Naive thymus-derived CD4-positive, alpha-beta T cell (primary cell): ENCODE measurements at regions of chr17 and their contacts with region 1.

Region 1: GRCh38 chr17:41322094-41322902 is 6.8 kb upstream of the KRTAP17-1 start:
- DNase-seq: peak in 7 of 9 donors; percentile 50 to 75 (median 60)
- ATAC-seq: peak; percentile 81
- H3K4me3 ChIP-seq: no peak overlapping the region
- H3K4me3 Mint-ChIP-seq: peak overlapping the region in 2 of 10 donors; percentile 25 to 27
- H3K27ac ChIP-seq: no peak overlapping the region
- H3K27ac Mint-ChIP-seq: peak overlapping the region; percentile 34 to 87 (median 77)
- H3K4me1 ChIP-seq: peaks cover 26 to 44% of the 10 kb centered on the region in 2 donors
- H3K4me1 Mint-ChIP-seq: peaks cover 11 to 59% (median 50%) of the 10 kb centered on the region in 7 donors
- H3K27me3 ChIP-seq: no peaks in the 10 kb centered on the region
- H3K27me3 Mint-ChIP-seq: no peaks in the 10 kb centered on the region

Region 2: GRCh38 chr17:40803617-40804082 is 518.6 kb before region 1 on chr17:
- CTCF ChIA-PET with region 1: interaction called, 6 read pairs
- POLR2A ChIA-PET with region 1: no interaction called
- intact Hi-C with region 1: loop called in 1 of 2 experiments (anchors 2 kb)
- DNase-seq: peak; percentile 34 to 74 (median 54)
- ATAC-seq: peak; percentile 90
- H3K4me3 ChIP-seq: no peak overlapping the region
- H3K4me3 Mint-ChIP-seq: peak overlapping the region in 1 of 10 donors; percentile 33
- H3K27ac ChIP-seq: no peak overlapping the region
- H3K27ac Mint-ChIP-seq: no peak overlapping the region
- H3K4me1 ChIP-seq: no peaks in the 10 kb centered on the region
- H3K4me1 Mint-ChIP-seq: peaks cover 0 to 4% (median 3%) of the 10 kb centered on the region in 7 donors
- H3K27me3 ChIP-seq: peaks cover 0 to 4% of the 10 kb centered on the region in 2 donors
- H3K27me3 Mint-ChIP-seq: peaks cover 33 to 51% (median 48%) of the 10 kb centered on the region in 5 donors

Region 3: GRCh38 chr17:40909351-40909750 is 412.9 kb before region 1 on chr17:
- CTCF ChIA-PET with region 1: interaction called, 5 read pairs
- POLR2A ChIA-PET with region 1: interaction called, 3 read pairs
- intact Hi-C with region 1: loop called (anchors 1 kb)
- DNase-seq: peak; percentile 29 to 70 (median 56)
- ATAC-seq: peak; percentile 93
- H3K4me3 ChIP-seq: no peak overlapping the region
- H3K4me3 Mint-ChIP-seq: no peak overlapping the region
- H3K27ac ChIP-seq: no peak overlapping the region
- H3K27ac Mint-ChIP-seq: no peak overlapping the region
- H3K4me1 ChIP-seq: no peaks in the 10 kb centered on the region
- H3K4me1 Mint-ChIP-seq: no peaks in the 10 kb centered on the region
- H3K27me3 ChIP-seq: peaks cover 5 to 7% of the 10 kb centered on the region in 2 donors
- H3K27me3 Mint-ChIP-seq: peaks cover 26 to 45% (median 36%) of the 10 kb centered on the region in 5 donors

Region 4: DNA sequence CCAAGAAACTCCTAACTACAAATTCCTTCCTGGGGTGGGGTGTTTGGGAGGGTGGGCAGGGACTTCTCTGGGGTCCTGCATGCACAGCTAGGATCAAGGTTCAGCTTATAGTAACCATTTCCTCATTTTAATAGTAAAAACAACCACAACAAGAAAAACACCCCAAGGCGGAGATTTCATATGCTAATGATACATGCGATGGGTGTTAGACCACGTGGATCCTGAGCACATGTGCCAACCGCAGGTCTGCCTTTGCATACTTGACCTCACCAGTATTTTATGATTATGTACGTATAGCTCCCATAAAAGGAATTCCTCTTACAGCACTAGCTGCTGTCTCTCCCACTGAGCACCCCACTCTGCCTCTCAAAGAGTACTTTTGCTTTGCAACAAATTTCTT is 206.0 kb before region 1 on chr17:
- CTCF ChIA-PET with region 1: interaction called, 6 read pairs
- POLR2A ChIA-PET with region 1: no interaction called
- intact Hi-C with region 1: loop called in 1 of 2 experiments (anchors 1 kb)
- DNase-seq: no peak
- ATAC-seq: peak; percentile 36
- H3K4me3 ChIP-seq: no peak overlapping the region
- H3K4me3 Mint-ChIP-seq: no peak overlapping the region
- H3K27ac ChIP-seq: no peak overlapping the region
- H3K27ac Mint-ChIP-seq: no peak overlapping the region
- H3K4me1 ChIP-seq: peaks cover 5 to 7% of the 10 kb centered on the region in 2 donors
- H3K4me1 Mint-ChIP-seq: peaks cover 4 to 40% (median 29%) of the 10 kb centered on the region in 7 donors
- H3K27me3 ChIP-seq: no peaks in the 10 kb centered on the region
- H3K27me3 Mint-ChIP-seq: peaks cover 0 to 15% (median 0%) of the 10 kb centered on the region in 5 donors

Region 5: GRCh38 chr17:41308251-41308917 is 13.9 kb before region 1 on chr17:
- CTCF ChIA-PET with region 1: interaction called, 39 read pairs
- POLR2A ChIA-PET with region 1: interaction called, 36 read pairs
- intact Hi-C with region 1: loop called in 1 of 2 experiments (anchors 1 kb)
- DNase-seq: peak in 8 of 9 donors; percentile 56 to 94 (median 92)
- ATAC-seq: peak; percentile 91
- H3K4me3 ChIP-seq: peak overlapping the region; percentile 24
- H3K4me3 Mint-ChIP-seq: peak overlapping the region; percentile 65 to 89 (median 78)
- H3K27ac ChIP-seq: peak overlapping the region; percentile 75
- H3K27ac Mint-ChIP-seq: peak overlapping the region; percentile 82 to 100 (median 98)
- H3K4me1 ChIP-seq: peaks cover 41 to 49% of the 10 kb centered on the region in 2 donors
- H3K4me1 Mint-ChIP-seq: peaks cover 28 to 80% (median 70%) of the 10 kb centered on the region in 7 donors
- H3K27me3 ChIP-seq: no peaks in the 10 kb centered on the region
- H3K27me3 Mint-ChIP-seq: peaks cover 0 to 8% (median 0%) of the 10 kb centered on the region in 5 donors

Region 6: DNA sequence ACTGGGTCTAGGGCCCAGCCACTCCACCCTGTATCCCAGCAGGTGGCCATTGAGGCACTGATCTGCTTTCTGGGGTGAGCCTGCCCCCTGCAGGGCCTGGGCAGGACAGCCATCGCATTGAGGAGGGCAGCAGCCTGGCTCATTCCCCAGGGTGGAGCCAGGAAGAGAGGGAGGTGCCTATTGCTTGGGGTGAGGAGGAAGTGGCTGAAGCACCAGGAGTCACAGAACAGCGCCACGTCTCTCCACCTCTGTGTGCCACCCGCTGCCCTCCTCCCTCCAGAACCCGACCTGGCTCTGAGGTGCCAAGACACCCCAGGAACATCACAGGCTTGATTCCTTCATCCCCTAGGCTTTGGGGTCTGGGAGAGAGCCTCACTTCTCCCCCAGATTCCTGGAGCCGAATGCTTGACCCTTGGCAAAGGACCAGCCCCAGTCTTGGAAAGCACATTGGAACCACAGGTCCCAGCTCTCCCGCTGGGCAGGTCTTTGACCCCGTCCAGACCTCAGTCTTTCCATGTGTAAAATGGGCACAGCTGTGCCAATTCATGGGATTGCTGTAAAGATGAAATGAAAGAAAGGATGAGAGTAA is 174.6 kb after region 1 on chr17:
- CTCF ChIA-PET with region 1: interaction called, 3 read pairs
- POLR2A ChIA-PET with region 1: no interaction called
- intact Hi-C with region 1: loop called in 1 of 2 experiments (anchors 5 kb)
- DNase-seq: peak; percentile 19 to 61 (median 48)
- ATAC-seq: peak; percentile 88
- H3K4me3 ChIP-seq: no peak overlapping the region
- H3K4me3 Mint-ChIP-seq: peak overlapping the region in 3 of 10 donors; percentile 30 to 59 (median 52)
- H3K27ac ChIP-seq: no peak overlapping the region
- H3K27ac Mint-ChIP-seq: peak overlapping the region in 4 of 9 donors; percentile 38 to 72 (median 57)
- H3K4me1 ChIP-seq: peaks cover 0 to 9% of the 10 kb centered on the region in 2 donors
- H3K4me1 Mint-ChIP-seq: peaks cover 21 to 29% (median 23%) of the 10 kb centered on the region in 7 donors
- H3K27me3 ChIP-seq: no peaks in the 10 kb centered on the region
- H3K27me3 Mint-ChIP-seq: peaks cover 0 to 8% (median 0%) of the 10 kb centered on the region in 5 donors

Region 7: GRCh38 chr17:42512626-42513250 is 1190.4 kb after region 1 on chr17:
- CTCF ChIA-PET with region 1: no interaction called
- POLR2A ChIA-PET with region 1: no interaction called
- intact Hi-C with region 1: no loop called
- DNase-seq: no peak
- ATAC-seq: no peak
- H3K4me3 ChIP-seq: no peak overlapping the region
- H3K4me3 Mint-ChIP-seq: no peak overlapping the region
- H3K27ac ChIP-seq: no peak overlapping the region
- H3K27ac Mint-ChIP-seq: no peak overlapping the region
- H3K4me1 ChIP-seq: no peaks in the 10 kb centered on the region
- H3K4me1 Mint-ChIP-seq: peaks cover 5 to 23% (median 5%) of the 10 kb centered on the region in 7 donors
- H3K27me3 ChIP-seq: no peaks in the 10 kb centered on the region
- H3K27me3 Mint-ChIP-seq: no peaks in the 10 kb centered on the region